ENCODE measurements at regions of chr12 and their contacts with region 1.

Region 1: DNA sequence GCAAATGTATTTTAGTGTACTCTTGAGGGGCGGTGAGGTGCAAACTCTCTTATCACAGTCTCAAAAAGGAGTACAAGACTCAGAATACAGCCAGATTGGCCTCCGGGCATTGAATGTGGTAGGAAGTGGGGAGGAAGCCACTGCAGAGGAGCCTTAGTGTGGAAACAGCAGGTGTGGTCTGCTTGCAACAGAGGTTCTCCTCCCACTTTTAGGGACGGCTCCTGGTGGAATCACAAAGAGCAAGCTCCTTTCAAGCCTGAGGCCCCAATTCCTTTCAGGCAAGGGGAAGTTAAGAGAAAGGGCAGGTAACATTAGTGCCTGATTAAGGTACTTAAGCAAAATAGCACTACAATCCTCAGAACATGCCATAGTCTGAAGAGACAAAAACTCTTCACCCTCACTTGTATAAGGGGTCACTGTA is 23.7 kb upstream of the SLC2A3 start:
- DNase-seq: peak; percentile 29 to 62 (median 56)
- H3K4me3 ChIP-seq: peak overlapping the region; percentile 54
- H3K4me3 Mint-ChIP-seq: peak overlapping the region; percentile 85 to 94 (median 93)
- H3K27ac ChIP-seq: peak overlapping the region; percentile 43
- H3K27ac Mint-ChIP-seq: peak overlapping the region; percentile 74 to 99 (median 96)
- H3K4me1 ChIP-seq: peaks cover 26% of the 10 kb centered on the region
- H3K4me1 Mint-ChIP-seq: peaks cover 31 to 45% (median 38%) of the 10 kb centered on the region in 3 donors
- H3K27me3 ChIP-seq: no peaks in the 10 kb centered on the region
- H3K27me3 Mint-ChIP-seq: no peaks in the 10 kb centered on the region

Region 2: DNA sequence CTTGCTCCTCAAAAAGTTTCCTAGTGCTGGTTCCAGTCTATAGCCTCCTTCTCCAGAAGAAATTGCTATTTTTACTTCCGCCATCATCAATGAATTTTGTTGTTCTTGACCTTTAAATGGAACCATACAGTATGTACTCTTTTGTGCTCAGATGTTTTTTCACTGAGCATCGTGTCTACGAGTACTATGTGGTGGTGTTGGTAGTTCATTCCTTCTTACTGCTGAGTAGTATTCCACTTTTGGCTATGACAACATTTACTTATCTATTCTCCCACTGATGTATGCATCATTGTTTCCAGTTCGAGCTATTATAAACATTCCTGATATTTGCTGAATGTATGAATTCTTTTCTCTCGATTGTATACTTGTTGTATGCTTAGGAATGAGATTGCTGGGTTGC is 115.6 kb before region 1 on chr12:
- CTCF ChIA-PET with region 1: no interaction called
- POLR2A ChIA-PET with region 1: interaction called, 10 read pairs
- DNase-seq: no peak
- H3K4me3 ChIP-seq: no peak overlapping the region
- H3K4me3 Mint-ChIP-seq: peak overlapping the region in 1 of 7 donors; percentile 63
- H3K27ac ChIP-seq: no peak overlapping the region
- H3K27ac Mint-ChIP-seq: no peak overlapping the region
- H3K4me1 ChIP-seq: no peaks in the 10 kb centered on the region
- H3K4me1 Mint-ChIP-seq: peaks cover 3 to 10% (median 7%) of the 10 kb centered on the region in 3 donors
- H3K27me3 ChIP-seq: no peaks in the 10 kb centered on the region
- H3K27me3 Mint-ChIP-seq: peaks cover 13 to 38% of the 10 kb centered on the region in 2 donors

Region 3: GRCh38 chr12:7859552-7859951 is 100.2 kb before region 1 on chr12:
- CTCF ChIA-PET with region 1: interaction called, 12 read pairs
- POLR2A ChIA-PET with region 1: interaction called, 3 read pairs
- DNase-seq: no peak
- H3K4me3 ChIP-seq: no peak overlapping the region
- H3K4me3 Mint-ChIP-seq: peak overlapping the region in 1 of 7 donors; percentile 34
- H3K27ac ChIP-seq: no peak overlapping the region
- H3K27ac Mint-ChIP-seq: no peak overlapping the region
- H3K4me1 ChIP-seq: no peaks in the 10 kb centered on the region
- H3K4me1 Mint-ChIP-seq: peaks cover 9 to 10% (median 9%) of the 10 kb centered on the region in 3 donors
- H3K27me3 ChIP-seq: no peaks in the 10 kb centered on the region
- H3K27me3 Mint-ChIP-seq: peaks cover 11 to 12% of the 10 kb centered on the region in 2 donors

Region 4: GRCh38 chr12:7970475-7971252 is 11.0 kb after region 1 on chr12:
- CTCF ChIA-PET with region 1: interaction called, 16 read pairs
- POLR2A ChIA-PET with region 1: interaction called, 23 read pairs
- DNase-seq: peak; percentile 73 to 89 (median 82)
- H3K4me3 ChIP-seq: peak overlapping the region; percentile 78
- H3K4me3 Mint-ChIP-seq: peak overlapping the region; percentile 83 to 94 (median 85)
- H3K27ac ChIP-seq: peak overlapping the region; percentile 90
- H3K27ac Mint-ChIP-seq: peak overlapping the region; percentile 92 to 100 (median 96)
- H3K4me1 ChIP-seq: peaks cover 19% of the 10 kb centered on the region
- H3K4me1 Mint-ChIP-seq: peaks cover 18 to 33% (median 28%) of the 10 kb centered on the region in 3 donors
- H3K27me3 ChIP-seq: no peaks in the 10 kb centered on the region
- H3K27me3 Mint-ChIP-seq: peaks cover 0 to 5% of the 10 kb centered on the region in 2 donors

Region 5: GRCh38 chr12:7989827-7990551 is 30.3 kb after region 1 on chr12:
- CTCF ChIA-PET with region 1: interaction called, 39 read pairs
- POLR2A ChIA-PET with region 1: interaction called, 4 read pairs
- DNase-seq: peak; percentile 34 to 85 (median 45)
- H3K4me3 ChIP-seq: peak overlapping the region; percentile 3
- H3K4me3 Mint-ChIP-seq: peak overlapping the region; percentile 1 to 90 (median 79)
- H3K27ac ChIP-seq: peak overlapping the region; percentile 43
- H3K27ac Mint-ChIP-seq: peak overlapping the region; percentile 75 to 96 (median 88)
- H3K4me1 ChIP-seq: peaks cover 31% of the 10 kb centered on the region
- H3K4me1 Mint-ChIP-seq: peaks cover 21 to 35% (median 28%) of the 10 kb centered on the region in 3 donors
- H3K27me3 ChIP-seq: no peaks in the 10 kb centered on the region
- H3K27me3 Mint-ChIP-seq: no peaks in the 10 kb centered on the region

Region 6: GRCh38 chr12:7995266-7995963 is 35.7 kb after region 1 on chr12:
- CTCF ChIA-PET with region 1: interaction called, 39 read pairs
- POLR2A ChIA-PET with region 1: no interaction called
- DNase-seq: peak; percentile 65 to 91 (median 80)
- H3K4me3 ChIP-seq: no peak overlapping the region
- H3K4me3 Mint-ChIP-seq: no peak overlapping the region
- H3K27ac ChIP-seq: no peak overlapping the region
- H3K27ac Mint-ChIP-seq: no peak overlapping the region
- H3K4me1 ChIP-seq: peaks cover 25% of the 10 kb centered on the region
- H3K4me1 Mint-ChIP-seq: peaks cover 12 to 16% (median 12%) of the 10 kb centered on the region in 3 donors
- H3K27me3 ChIP-seq: no peaks in the 10 kb centered on the region
- H3K27me3 Mint-ChIP-seq: no peaks in the 10 kb centered on the region

Measured in CD8-positive, alpha-beta memory T cell (primary cell).